ENCODE measurements at regions of chr14 and their contacts with region 1.

Region 1: GRCh38 chr14:30656190-30656632 is 34.1 kb downstream of the SCFD1 start:
- DNase-seq: no peak
- CTCF ChIP-seq: peak; percentile 35

Region 2: GRCh38 chr14:30906752-30907658 is 250.8 kb after region 1 on chr14:
- in situ Hi-C with region 1: loop called (anchors 10 kb)
- DNase-seq: no peak
- CTCF ChIP-seq: peak; percentile 42

Region 3: DNA sequence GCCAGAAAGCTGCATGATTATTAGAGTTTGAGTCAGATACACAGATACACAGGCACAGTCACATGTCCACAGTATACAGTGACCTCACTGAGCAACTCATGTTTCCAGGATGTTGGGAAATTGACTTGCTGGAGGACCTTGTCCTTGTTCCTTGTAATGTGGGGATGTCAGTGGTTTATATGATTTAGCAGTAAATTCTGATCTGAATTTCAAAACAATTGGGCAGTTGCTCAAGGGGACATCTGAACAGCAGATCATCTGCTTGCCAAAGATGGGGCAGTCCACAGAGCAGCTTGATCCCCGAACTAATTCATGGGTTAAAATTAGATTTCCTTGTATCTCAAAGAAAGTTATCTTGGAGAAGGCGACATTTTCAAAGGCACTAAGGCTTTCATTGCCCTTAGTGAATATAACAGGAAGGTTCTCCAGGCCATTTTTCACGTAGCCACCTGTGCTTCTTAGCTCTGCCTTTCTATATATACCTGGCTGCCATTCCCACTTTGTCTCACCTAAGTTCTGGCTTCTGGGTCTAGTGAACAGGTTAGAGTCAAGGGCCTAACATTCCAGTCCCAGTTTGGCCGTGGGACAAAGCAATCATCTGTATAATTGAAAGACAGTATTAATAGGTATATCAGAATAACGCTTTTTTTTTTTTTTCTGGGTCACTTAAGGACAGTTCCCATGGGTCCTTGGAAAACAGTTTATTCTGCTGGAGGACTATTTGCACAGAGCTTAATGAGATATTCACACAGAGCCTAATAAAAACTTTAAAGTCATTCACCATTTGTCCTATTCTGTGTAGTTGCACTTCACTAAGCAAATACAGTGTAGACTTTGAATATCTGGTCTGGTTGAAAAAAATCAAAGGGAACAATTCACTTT is 434.9 kb after region 1 on chr14:
- in situ Hi-C with region 1: loop called (anchors 25 kb)
- DNase-seq: no peak
- CTCF ChIP-seq: no peak

Region 4: DNA sequence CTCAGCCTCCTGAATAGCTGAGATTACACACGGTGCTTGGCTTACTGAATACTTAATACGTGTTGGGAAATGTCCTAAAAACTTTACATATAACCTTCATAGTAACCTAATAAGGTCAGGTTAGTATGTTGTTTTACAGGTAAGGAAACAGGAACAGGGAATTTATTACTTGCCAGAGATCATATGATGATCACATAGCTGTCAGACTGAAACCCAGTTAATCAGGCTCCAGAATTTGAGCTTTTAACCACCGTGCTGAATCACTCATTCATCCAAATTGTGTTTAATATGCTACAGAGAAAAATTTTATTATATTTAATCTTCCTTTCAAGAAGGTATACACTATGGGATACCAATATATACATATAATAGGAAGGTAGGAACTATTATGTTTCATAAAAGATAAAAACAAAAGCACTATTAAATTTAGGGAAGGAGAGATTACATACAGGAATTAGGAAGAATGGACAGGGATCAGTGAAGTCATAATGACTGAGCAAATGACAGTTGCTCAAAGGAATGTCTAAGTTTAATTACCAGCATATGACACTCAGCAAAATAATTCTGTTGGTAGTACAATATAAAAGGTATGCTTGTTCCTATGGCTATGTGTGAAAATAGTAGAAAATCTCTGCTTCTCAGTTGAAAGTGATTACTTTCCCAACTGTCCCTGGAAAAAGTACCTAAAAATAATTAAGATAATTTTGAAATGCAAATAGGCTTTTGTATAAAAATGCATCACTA is 704.9 kb after region 1 on chr14:
- in situ Hi-C with region 1: loop called (anchors 25 kb)
- DNase-seq: no peak
- CTCF ChIP-seq: no peak

Measured in GM13976 (cell line).